Activated T-helper 1 cell treated with anti-CD3 and anti-CD28 coated beads, Interleukin-12 subunit alpha, Interleukin-12 subunit beta, Interleukin-2, Interleukin-4 antibody, amounts not matched to agents 30 ng/mL and 10 ng/mL and 1 ng/mL, durations not matched to agents 14 hours and 24 hours and 36 hours (primary cell): ENCODE measurements at regions of chr12 and their contacts with region 1.

Region 1: DNA sequence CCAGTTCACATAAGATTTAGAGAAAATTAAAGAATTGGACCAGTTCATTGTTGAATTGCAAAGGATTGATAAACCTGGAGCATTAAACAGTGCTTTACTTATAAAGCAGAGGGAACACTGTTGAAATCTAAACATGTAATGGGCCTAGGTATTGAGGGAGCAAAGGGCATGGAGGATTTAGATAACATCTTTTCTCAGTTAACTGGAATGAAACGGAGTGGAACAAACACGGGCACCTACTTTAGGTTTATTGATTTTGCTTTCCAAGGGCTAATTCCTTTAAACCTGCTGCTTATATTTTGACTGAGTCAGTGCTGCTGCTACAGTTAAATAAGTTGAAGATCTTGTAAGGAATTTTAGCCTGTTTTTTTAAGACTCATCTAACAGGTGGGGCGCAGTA is 5.6 kb downstream of the EIF4B start:
- DNase-seq: no peak
- H3K4me3 Mint-ChIP-seq: no peak overlapping the region
- H3K27ac Mint-ChIP-seq: no peak overlapping the region
- H3K4me1 Mint-ChIP-seq: peaks cover 51% of the 10 kb centered on the region
- H3K27me3 Mint-ChIP-seq: no peaks in the 10 kb centered on the region

Region 2: GRCh38 chr12:53031617-53032016 is 19.7 kb after region 1 on chr12:
- intact Hi-C with region 1: loop called (anchors 2 kb)
- DNase-seq: no peak
- H3K4me3 Mint-ChIP-seq: no peak overlapping the region
- H3K27ac Mint-ChIP-seq: no peak overlapping the region
- H3K4me1 Mint-ChIP-seq: peaks cover 13% of the 10 kb centered on the region
- H3K27me3 Mint-ChIP-seq: no peaks in the 10 kb centered on the region